A673 (cell line): ENCODE measurements at regions of chr1 and their contacts with region 1.

Region 1: GRCh38 chr1:43227143-43227764 is 42.5 kb upstream of the TMEM125 start:
- DNase-seq: peak; percentile 82
- H3K4me3 ChIP-seq: no peak overlapping the region
- H3K27ac ChIP-seq: no peak overlapping the region
- H3K4me1 ChIP-seq: no peaks in the 10 kb centered on the region
- H3K27me3 ChIP-seq: no peaks in the 10 kb centered on the region
- CTCF ChIP-seq: peak; percentile 96

Region 2: DNA sequence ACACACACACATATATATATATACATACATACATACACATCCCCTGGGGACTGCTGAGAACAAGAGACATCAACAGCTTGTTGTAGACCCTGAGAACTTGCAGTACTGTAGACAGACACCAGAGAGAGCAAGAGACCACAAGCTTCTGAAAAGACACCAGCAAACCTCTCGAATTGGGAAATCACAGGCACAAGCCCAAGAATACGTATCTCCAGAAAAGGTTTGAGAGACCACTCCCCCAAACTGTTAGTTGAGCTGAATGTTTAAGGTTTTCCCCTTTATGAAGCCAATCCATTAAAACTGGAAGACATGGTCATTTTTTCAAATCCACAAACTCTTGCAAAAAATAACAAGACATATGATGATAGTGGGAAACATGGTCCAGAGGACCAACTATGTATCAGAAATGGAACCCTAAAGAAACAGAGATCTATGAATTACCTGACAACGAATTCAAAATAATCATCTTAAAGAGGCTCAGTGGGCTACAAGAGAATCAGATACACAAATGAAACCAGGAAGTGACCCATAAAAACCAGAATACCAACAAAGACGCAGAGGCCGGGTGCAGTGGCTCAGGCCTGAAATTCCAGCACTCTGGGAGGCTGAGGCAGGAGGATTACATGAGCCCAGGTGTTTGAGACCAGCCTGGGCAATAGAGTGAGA is 313.7 kb before region 1 on chr1:
- CTCF ChIA-PET with region 1: no interaction called
- POLR2A ChIA-PET with region 1: no interaction called
- intact Hi-C with region 1: loop called (anchors 5 kb)
- DNase-seq: peak; percentile 90
- H3K4me3 ChIP-seq: no peak overlapping the region
- H3K27ac ChIP-seq: no peak overlapping the region
- H3K4me1 ChIP-seq: no peaks in the 10 kb centered on the region
- H3K27me3 ChIP-seq: no peaks in the 10 kb centered on the region
- CTCF ChIP-seq: peak; percentile 67

Region 3: DNA sequence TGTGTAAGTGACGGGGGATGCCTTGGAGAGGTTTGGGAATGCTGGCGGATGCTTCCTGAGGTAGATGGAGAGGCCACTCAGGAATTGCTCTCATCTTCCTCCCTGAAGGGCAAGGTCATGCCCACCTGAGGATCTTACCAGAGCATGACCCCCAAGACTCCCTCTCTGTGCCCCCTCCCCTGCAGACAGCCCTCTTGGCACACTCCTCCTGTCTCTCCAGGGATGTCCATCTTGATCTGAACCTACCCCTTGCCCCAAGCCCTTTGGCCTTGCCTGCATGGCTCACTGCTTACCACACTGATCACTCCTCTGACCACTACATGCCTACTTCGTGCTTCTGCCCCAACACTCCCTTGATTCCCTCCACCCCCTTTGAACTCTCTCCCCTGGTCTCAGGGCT is 92.5 kb after region 1 on chr1:
- CTCF ChIA-PET with region 1: no interaction called
- POLR2A ChIA-PET with region 1: no interaction called
- intact Hi-C with region 1: no loop called
- DNase-seq: no peak
- H3K4me3 ChIP-seq: no peak overlapping the region
- H3K27ac ChIP-seq: no peak overlapping the region
- H3K4me1 ChIP-seq: peaks cover 5% of the 10 kb centered on the region
- H3K27me3 ChIP-seq: no peaks in the 10 kb centered on the region
- CTCF ChIP-seq: no peak

Region 4: GRCh38 chr1:43329995-43330751 is 102.9 kb after region 1 on chr1:
- CTCF ChIA-PET with region 1: no interaction called
- POLR2A ChIA-PET with region 1: interaction called, 22 read pairs
- intact Hi-C with region 1: no loop called
- DNase-seq: peak; percentile 84
- H3K4me3 ChIP-seq: no peak overlapping the region
- H3K27ac ChIP-seq: peak overlapping the region; percentile 44
- H3K4me1 ChIP-seq: peaks cover 7% of the 10 kb centered on the region
- H3K27me3 ChIP-seq: no peaks in the 10 kb centered on the region
- CTCF ChIP-seq: no peak